CD4-positive, alpha-beta memory T cell (primary cell): ENCODE measurements at regions of chr5 and their contacts with region 1.

Region 1: DNA sequence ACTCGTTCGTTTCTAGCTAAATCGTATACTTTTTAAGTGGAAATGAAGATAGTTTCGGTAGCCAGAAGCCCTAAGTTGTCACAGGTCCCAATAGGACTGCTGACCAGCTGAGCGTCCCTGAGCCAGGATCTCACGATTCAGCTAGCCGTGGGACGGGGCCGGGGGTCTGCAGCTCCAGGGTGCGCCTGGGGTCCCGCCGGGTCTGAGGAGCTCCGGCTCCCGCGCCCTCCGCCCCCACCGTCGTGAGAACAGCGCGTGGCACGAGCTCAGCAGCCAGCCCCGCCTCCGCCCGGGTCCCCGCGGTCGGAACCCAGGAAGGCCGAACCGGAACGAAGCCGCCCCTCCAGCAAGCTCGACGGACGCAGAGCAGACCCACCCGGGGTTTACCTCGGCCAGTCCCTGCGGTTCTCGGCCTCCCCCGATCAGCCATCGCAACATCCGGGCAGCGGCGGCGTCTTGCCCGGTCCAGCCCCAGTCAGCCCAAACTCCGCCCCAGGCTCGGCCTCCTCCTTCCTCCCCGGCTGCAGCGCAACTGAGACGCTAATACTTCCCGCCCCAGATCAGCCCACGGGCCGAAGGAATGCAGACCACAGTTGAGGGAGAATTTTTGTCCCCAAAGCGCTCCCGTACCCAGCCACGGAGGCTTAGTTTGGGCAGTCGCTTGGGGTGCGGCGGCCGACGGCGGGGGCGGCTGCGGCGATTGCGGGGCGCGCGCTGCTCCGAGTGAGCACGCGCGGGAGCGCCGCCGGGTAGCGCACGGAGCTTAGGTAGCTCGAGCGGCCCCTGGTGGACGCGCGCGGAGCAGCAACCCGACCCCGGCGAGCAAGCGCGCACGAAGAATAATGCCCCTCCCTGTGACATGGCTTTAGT is at the start of gene WDR41:
- DNase-seq: peak; percentile 79 to 87 (median 84)
- H3K4me3 ChIP-seq: peak within 1 kb of the TSS; percentile 57 to 91
- H3K4me3 Mint-ChIP-seq: peak within 1 kb of the TSS; percentile 85 to 95 (median 91)
- H3K27ac ChIP-seq: peak within 1 kb of the TSS; percentile 64
- H3K27ac Mint-ChIP-seq: peak within 1 kb of the TSS; percentile 65 to 94 (median 91)
- H3K4me1 ChIP-seq: peaks cover 7% of the 10 kb centered on the region
- H3K4me1 Mint-ChIP-seq: peaks cover 9 to 14% (median 10%) of the 10 kb centered on the region in 4 donors
- H3K27me3 ChIP-seq: no peaks in the 10 kb centered on the region
- H3K27me3 Mint-ChIP-seq: peaks cover 10 to 12% of the 10 kb centered on the region in 2 donors
- total RNA-seq, gene WDR41: 11.0 to 14.0 TPM

Region 2: DNA sequence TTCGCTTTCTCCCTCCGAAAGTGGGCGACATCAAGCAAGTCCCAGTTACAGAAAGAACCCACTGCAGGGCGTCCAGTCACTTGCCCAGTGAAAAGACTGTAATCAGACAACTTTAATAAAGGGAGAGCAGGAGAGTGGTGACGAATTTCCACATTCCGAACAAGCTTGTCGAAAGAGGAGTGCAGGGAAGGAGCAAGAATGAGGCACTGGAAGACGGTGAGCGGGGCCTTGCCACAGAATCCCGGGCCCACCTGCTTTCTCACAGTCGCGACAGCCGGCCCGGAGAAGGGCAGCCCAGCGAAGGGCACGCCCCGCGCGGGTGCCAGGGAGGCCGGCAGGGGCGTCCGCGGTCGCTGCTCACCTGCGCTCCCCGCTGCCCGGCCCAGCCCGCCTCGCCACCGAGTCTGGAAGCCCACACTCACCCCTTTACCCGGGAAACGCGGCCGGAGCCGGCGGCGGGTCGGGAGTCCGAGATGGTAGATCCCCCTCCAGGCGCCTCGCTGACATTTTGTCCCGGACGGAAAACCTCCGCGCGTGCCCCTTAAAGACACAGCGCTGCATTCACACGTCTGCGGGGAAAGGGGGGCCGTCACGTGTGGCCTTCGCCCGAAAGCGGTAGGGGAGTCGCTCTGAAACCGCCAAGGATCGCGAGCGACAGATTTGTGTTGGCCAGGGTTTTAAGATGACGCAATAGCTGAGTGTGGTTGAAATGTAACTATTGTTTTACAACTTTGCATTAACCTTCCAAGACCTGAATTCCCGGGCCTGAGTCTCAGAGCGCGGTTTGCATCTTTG is 405.1 kb before region 1 on chr5 and contains the start of gene ZBED3:
- CTCF ChIA-PET with region 1: interaction called, 6 read pairs
- POLR2A ChIA-PET with region 1: no interaction called
- intact Hi-C with region 1: loop called (anchors 2 kb)
- DNase-seq: peak; percentile 48 to 74 (median 56)
- H3K4me3 ChIP-seq: peak within 1 kb of the TSS; percentile 25 to 54
- H3K4me3 Mint-ChIP-seq: peak within 1 kb of the TSS; percentile 88 to 96 (median 93)
- H3K27ac ChIP-seq: no peak within 1 kb of the TSS
- H3K27ac Mint-ChIP-seq: peak within 1 kb of the TSS in 6 of 7 donors; percentile 3 to 93 (median 87)
- H3K4me1 ChIP-seq: peaks cover 12% of the 10 kb centered on the region
- H3K4me1 Mint-ChIP-seq: peaks cover 10 to 14% (median 14%) of the 10 kb centered on the region in 4 donors
- H3K27me3 ChIP-seq: no peaks in the 10 kb centered on the region
- H3K27me3 Mint-ChIP-seq: peaks cover 2 to 4% of the 10 kb centered on the region in 2 donors
- total RNA-seq, gene ZBED3: 0.67 to 1.4 TPM

Region 3: GRCh38 chr5:77775790-77776553 is 284.0 kb after region 1 on chr5 and contains the start of gene TBCA:
- CTCF ChIA-PET with region 1: interaction called, 4 read pairs
- POLR2A ChIA-PET with region 1: no interaction called
- intact Hi-C with region 1: loop called (anchors 5 kb)
- DNase-seq: peak; percentile 91 to 94 (median 93)
- H3K4me3 ChIP-seq: peak within 1 kb of the TSS; percentile 61 to 85
- H3K4me3 Mint-ChIP-seq: peak within 1 kb of the TSS; percentile 90 to 98 (median 96)
- H3K27ac ChIP-seq: peak within 1 kb of the TSS; percentile 97
- H3K27ac Mint-ChIP-seq: peak within 1 kb of the TSS; percentile 88 to 99 (median 98)
- H3K4me1 ChIP-seq: peaks cover 46% of the 10 kb centered on the region
- H3K4me1 Mint-ChIP-seq: peaks cover 33 to 50% (median 45%) of the 10 kb centered on the region in 4 donors
- H3K27me3 ChIP-seq: no peaks in the 10 kb centered on the region
- H3K27me3 Mint-ChIP-seq: no peaks in the 10 kb centered on the region
- total RNA-seq, gene TBCA: 80.4 to 97.2 TPM